ENCODE measurements at regions of chr4 and their contacts with region 1.

Region 1: GRCh38 chr4:36351082-36351666 is 69.8 kb downstream of the DTHD1 start:
- DNase-seq: peak; percentile 57 to 73 (median 72)
- H3K4me3 ChIP-seq: no peak overlapping the region
- H3K4me3 Mint-ChIP-seq: no peak overlapping the region
- H3K27ac ChIP-seq: no peak overlapping the region
- H3K27ac Mint-ChIP-seq: peak overlapping the region in 1 of 7 donors; percentile 27
- H3K4me1 ChIP-seq: peaks cover 11 to 29% of the 10 kb centered on the region in 2 donors
- H3K4me1 Mint-ChIP-seq: peaks cover 21% of the 10 kb centered on the region
- H3K27me3 ChIP-seq: no peaks in the 10 kb centered on the region
- H3K27me3 Mint-ChIP-seq: peaks cover 0 to 3% (median 1%) of the 10 kb centered on the region in 3 donors
- CTCF ChIP-seq: peak; percentile 92

Region 2: DNA sequence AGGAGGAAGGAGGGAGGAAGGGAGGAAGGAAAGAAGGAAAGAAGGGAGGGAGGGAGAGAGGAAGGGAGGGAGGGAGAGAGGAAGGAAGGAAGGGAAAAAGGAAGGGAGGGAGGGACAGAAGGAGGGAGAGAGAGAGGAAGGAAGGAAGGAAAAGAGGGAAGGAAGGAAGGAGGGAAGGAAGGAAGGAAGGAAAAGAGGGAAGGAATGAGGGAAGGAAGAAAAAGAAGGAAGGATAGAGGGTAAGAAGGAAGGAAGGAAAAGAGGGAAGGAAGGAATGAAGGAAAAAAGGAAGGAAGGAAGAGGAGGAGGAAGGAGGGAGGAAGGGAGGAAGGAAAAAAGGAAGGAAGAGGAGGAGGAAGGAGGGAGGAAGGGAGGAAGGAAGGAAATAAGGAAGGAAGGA is 903.7 kb before region 1 on chr4:
- intact Hi-C with region 1: no loop called
- DNase-seq: no peak
- H3K4me3 ChIP-seq: no peak overlapping the region
- H3K4me3 Mint-ChIP-seq: no peak overlapping the region
- H3K27ac ChIP-seq: no peak overlapping the region
- H3K27ac Mint-ChIP-seq: peak overlapping the region in 1 of 7 donors; percentile 60
- H3K4me1 ChIP-seq: no peaks in the 10 kb centered on the region
- H3K4me1 Mint-ChIP-seq: no peaks in the 10 kb centered on the region
- H3K27me3 ChIP-seq: no peaks in the 10 kb centered on the region
- H3K27me3 Mint-ChIP-seq: no peaks in the 10 kb centered on the region
- CTCF ChIP-seq: no peak

Region 3: GRCh38 chr4:36269101-36269500 is 82.1 kb before region 1 on chr4:
- intact Hi-C with region 1: no loop called
- DNase-seq: peak in 1 of 3 donors; percentile 45
- H3K4me3 ChIP-seq: no peak overlapping the region
- H3K4me3 Mint-ChIP-seq: no peak overlapping the region
- H3K27ac ChIP-seq: no peak overlapping the region
- H3K27ac Mint-ChIP-seq: peak overlapping the region in 1 of 7 donors; percentile 30
- H3K4me1 ChIP-seq: peaks cover 18 to 35% of the 10 kb centered on the region in 2 donors
- H3K4me1 Mint-ChIP-seq: peaks cover 34% of the 10 kb centered on the region
- H3K27me3 ChIP-seq: no peaks in the 10 kb centered on the region
- H3K27me3 Mint-ChIP-seq: no peaks in the 10 kb centered on the region
- CTCF ChIP-seq: no peak

Region 4: DNA sequence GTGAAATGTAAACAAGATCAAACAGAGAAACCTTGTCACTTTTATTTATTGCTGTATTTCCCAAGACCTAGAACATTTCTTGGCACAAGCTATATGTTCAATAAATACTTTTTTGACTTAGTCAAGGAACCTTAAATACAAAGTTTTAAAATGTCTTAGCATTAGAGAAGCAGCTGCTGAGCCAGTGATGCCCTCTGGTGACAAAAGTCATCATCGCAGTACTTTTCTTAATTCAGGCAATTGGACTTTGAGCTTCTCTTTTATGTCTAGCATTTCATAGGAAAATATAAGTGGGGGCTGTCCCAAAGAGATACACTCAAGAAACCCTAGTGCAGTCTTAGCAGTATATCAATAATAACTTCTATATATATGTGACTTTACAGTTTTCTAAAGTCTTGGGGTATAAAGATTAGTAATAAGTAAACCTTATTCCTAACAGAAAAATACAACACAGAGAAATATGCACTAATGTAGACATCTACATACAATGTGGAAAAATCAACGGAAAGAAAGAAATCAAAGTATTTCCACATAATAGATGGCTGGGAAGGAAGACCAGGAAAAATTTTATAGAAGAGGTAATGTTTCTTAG is 48.7 kb after region 1 on chr4:
- intact Hi-C with region 1: loop called (anchors 2 to 5 kb)
- DNase-seq: peak; percentile 19 to 57 (median 41)
- H3K4me3 ChIP-seq: no peak overlapping the region
- H3K4me3 Mint-ChIP-seq: no peak overlapping the region
- H3K27ac ChIP-seq: no peak overlapping the region
- H3K27ac Mint-ChIP-seq: no peak overlapping the region
- H3K4me1 ChIP-seq: no peaks in the 10 kb centered on the region
- H3K4me1 Mint-ChIP-seq: peaks cover 4% of the 10 kb centered on the region
- H3K27me3 ChIP-seq: no peaks in the 10 kb centered on the region
- H3K27me3 Mint-ChIP-seq: peaks cover 0 to 2% (median 0%) of the 10 kb centered on the region in 3 donors
- CTCF ChIP-seq: peak; percentile 87

Region 5: GRCh38 chr4:37389967-37390580 is 1038.9 kb after region 1 on chr4:
- intact Hi-C with region 1: loop called in 1 of 2 experiments (anchors 5 kb)
- DNase-seq: peak; percentile 33 to 66 (median 48)
- H3K4me3 ChIP-seq: no peak overlapping the region
- H3K4me3 Mint-ChIP-seq: peak overlapping the region; percentile 43 to 51
- H3K27ac ChIP-seq: no peak overlapping the region
- H3K27ac Mint-ChIP-seq: peak overlapping the region in 1 of 7 donors; percentile 64
- H3K4me1 ChIP-seq: peaks cover 43 to 49% of the 10 kb centered on the region in 2 donors
- H3K4me1 Mint-ChIP-seq: peaks cover 45% of the 10 kb centered on the region
- H3K27me3 ChIP-seq: no peaks in the 10 kb centered on the region
- H3K27me3 Mint-ChIP-seq: no peaks in the 10 kb centered on the region
- CTCF ChIP-seq: peak; percentile 74

Measured in CD14-positive monocyte (primary cell).